ENCODE measurements at regions of chr18 and their contacts with region 1.

Region 1: DNA sequence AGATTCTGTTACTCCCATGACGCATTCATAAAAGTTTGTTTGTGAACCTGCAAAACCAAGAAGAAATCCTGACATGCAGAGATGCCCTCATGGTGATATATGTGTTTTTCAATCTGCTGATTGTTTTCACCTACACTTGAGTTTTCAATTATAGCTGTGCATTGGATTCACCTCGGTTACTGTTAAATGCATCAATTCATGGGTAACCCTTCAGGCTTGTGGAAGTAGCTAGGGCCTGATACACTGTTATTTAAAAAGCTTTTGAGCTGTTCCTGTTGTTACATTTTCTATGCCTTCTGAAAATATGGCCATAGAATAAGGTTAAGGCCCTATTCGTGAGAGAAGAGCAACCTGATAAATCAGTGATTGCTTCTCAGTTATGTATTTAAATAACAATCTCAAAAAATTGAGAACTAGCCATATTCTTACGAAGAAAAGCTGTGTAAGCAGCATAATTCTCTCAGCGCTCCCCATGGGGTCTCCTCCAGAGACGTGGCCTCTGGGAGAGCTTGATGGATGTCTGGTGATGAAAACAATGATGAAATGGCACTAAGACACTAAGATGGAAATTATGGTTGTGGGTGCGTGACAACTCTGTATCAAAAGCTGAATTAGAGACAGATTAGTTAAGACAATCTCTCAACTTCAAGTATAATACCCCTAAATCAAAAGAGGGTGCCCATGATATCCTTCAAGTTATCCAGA is 60.5 kb downstream of the RIT2 start:
- DNase-seq: no peak
- ATAC-seq: no peak
- H3K4me3 ChIP-seq: no peak overlapping the region
- H3K4me3 Mint-ChIP-seq: no peak overlapping the region
- H3K27ac ChIP-seq: no peak overlapping the region
- H3K27ac Mint-ChIP-seq: no peak overlapping the region
- H3K4me1 ChIP-seq: no peaks in the 10 kb centered on the region
- H3K4me1 Mint-ChIP-seq: no peaks in the 10 kb centered on the region
- H3K27me3 ChIP-seq: no peaks in the 10 kb centered on the region
- H3K27me3 Mint-ChIP-seq: no peaks in the 10 kb centered on the region
- CTCF ChIP-seq: no peak

Region 2: GRCh38 chr18:43009674-43010073 is 45.3 kb before region 1 on chr18:
- CTCF ChIA-PET with region 1: no interaction called
- POLR2A ChIA-PET with region 1: no interaction called
- intact Hi-C with region 1: loop called in 1 of 2 experiments (anchors 5 kb)
- DNase-seq: no peak
- ATAC-seq: no peak
- H3K4me3 ChIP-seq: no peak overlapping the region
- H3K4me3 Mint-ChIP-seq: no peak overlapping the region
- H3K27ac ChIP-seq: no peak overlapping the region
- H3K27ac Mint-ChIP-seq: no peak overlapping the region
- H3K4me1 ChIP-seq: no peaks in the 10 kb centered on the region
- H3K4me1 Mint-ChIP-seq: no peaks in the 10 kb centered on the region
- H3K27me3 ChIP-seq: no peaks in the 10 kb centered on the region
- H3K27me3 Mint-ChIP-seq: no peaks in the 10 kb centered on the region
- CTCF ChIP-seq: no peak

Measured in CD8-positive, alpha-beta T cell (primary cell).